ENCODE measurements at regions of chr10 and their contacts with region 1.

Region 1: DNA sequence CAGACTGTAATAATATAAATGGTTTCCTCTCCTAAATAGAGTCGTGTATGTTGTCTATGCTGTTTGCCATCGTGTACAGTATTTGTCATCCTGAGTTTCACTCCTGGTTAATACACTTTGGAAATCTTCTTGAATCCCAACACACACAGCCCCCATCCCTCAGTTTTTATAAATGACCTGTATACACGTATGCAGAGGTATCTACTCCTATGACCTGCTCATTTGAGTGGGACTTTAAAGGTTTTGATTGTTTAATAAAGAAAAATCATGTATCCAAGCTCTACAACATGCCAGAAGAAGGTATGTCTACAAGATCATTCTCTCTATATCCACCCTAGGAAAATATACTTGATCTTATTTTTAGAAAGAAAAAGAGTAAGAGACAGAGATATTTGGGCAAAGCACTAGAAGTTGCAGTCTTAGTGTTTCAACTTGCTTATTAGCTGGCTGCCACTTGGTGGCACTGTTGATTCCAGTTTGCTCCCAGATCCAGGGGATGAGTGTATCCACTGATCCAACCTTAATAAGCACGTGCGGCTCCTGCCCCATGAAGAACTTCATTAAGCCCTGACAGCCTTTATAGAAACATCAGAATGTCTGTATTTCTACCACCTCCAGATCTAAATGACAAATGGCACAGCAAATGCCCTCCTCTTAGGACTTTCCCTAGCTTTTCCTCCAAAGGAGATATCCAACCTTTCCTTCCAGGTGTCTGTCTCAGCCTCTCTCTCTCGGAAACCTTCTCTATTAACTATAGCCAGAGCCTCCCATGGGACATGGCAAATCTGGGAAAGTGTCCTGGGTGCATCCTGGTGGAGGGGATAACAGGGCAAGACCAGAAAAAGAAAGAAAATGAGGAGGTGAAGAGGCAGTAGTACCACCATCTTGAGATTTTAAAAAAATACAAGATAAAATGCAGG is 181.6 kb upstream of the NEBL start:
- DNase-seq: peak in 2 of 3 donors; percentile 65 to 78
- ATAC-seq: peak; percentile 90
- H3K4me3 ChIP-seq: no peak overlapping the region
- H3K4me1 ChIP-seq: no peaks in the 10 kb centered on the region
- CTCF ChIP-seq: peak; percentile 22

Region 2: DNA sequence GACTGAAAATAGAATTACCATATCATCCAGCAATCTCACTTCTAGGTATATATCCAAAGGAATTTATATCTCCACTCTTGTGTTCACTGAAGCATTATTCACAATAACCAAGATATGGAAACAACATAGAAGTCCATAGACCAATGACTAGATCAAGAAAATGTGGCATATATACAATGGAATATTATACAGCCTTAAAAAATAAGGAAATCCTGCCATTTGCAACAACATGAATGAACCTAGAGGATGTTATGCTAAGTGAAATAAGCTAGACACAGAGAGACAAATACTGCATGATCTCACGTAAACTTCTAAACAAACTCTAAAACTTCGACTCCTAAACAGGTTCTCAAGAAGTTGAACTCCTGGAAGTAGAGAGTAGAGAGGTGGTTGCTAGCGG is 192.3 kb after region 1 on chr10:
- intact Hi-C with region 1: loop called in 1 of 2 experiments (anchors 2 kb)
- DNase-seq: no peak
- ATAC-seq: no peak
- H3K4me3 ChIP-seq: no peak overlapping the region
- H3K4me1 ChIP-seq: no peaks in the 10 kb centered on the region
- CTCF ChIP-seq: no peak

Measured in mucosa of descending colon (tissue), 3 donors.